PC-9 (cell line): ENCODE measurements at regions of chr15 and their contacts with region 1.

Region 1: GRCh38 chr15:63701365-63701764 is 104.2 kb downstream of the FBXL22 start:
- DNase-seq: no peak
- H3K4me3 ChIP-seq: no peak overlapping the region
- H3K27ac ChIP-seq: no peak overlapping the region
- H3K4me1 ChIP-seq: no peaks in the 10 kb centered on the region
- H3K27me3 ChIP-seq: no peaks in the 10 kb centered on the region
- CTCF ChIP-seq: no peak

Region 2: DNA sequence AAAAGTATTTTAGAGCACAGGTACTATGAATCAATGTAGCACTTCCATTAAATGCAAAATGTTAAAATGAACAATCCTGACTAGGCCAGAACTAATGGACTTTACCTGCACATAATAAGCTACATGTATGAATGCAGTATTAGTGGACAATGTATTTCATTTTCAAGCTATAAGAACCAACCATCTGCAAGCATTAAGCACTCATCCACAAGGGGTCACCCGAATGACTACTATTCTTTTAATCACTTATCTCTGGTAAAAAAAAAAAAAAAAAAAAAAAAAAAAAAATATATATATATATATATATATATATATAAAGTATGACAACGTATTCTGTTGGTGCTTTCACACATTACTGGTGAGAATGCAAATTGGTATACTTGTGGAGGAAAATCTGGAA is 125.2 kb after region 1 on chr15:
- CTCF ChIA-PET with region 1: interaction called, 11 read pairs
- POLR2A ChIA-PET with region 1: no interaction called
- intact Hi-C with region 1: no loop called
- DNase-seq: no peak
- H3K4me3 ChIP-seq: no peak overlapping the region
- H3K27ac ChIP-seq: no peak overlapping the region
- H3K4me1 ChIP-seq: no peaks in the 10 kb centered on the region
- H3K27me3 ChIP-seq: no peaks in the 10 kb centered on the region
- CTCF ChIP-seq: peak; percentile 38